Body of pancreas (tissue), 4 donors: ENCODE measurements at regions of chr20 and their contacts with region 1.

Region 1: DNA sequence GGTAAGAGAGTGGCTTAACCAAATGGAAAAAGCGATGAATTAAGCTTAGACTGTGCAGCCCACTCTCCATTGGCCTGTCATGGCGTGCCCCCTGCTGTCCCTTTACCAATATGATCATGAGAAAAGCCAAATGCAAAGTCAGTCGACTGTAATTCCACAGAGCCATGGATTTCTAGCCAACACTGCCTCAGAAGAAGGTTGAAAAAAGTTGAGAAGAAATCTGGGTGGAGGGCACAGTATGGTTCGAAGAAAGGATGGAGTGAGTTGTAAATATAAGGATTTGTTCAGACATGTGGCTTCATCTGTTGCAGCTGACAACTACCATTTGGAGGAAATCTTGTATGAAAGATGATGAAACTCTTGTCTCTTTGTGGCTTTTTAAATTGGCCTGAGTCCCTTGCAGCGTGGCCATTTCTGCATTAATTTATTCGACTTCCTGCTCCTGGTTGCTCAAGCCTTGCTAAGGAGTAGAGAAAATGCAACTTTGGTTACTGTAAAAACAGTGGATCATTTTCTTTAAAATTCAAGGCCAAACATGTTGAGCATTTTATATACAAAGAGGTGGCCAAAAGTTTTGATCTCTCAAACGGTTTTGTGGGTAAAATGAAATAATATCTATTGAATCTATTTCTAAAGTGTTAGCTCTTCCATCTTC is 251.5 kb downstream of the DOK5 start:
- DNase-seq: peak; percentile 58 to 71 (median 66)
- ATAC-seq: peak; percentile 81
- H3K4me3 ChIP-seq: no peak overlapping the region
- H3K27ac ChIP-seq: no peak overlapping the region
- H3K4me1 ChIP-seq: no peaks in the 10 kb centered on the region
- H3K27me3 ChIP-seq: no peaks in the 10 kb centered on the region
- CTCF ChIP-seq: peak; percentile 22 to 83 (median 76)
- POLR2A ChIP-seq: no peak

Region 2: DNA sequence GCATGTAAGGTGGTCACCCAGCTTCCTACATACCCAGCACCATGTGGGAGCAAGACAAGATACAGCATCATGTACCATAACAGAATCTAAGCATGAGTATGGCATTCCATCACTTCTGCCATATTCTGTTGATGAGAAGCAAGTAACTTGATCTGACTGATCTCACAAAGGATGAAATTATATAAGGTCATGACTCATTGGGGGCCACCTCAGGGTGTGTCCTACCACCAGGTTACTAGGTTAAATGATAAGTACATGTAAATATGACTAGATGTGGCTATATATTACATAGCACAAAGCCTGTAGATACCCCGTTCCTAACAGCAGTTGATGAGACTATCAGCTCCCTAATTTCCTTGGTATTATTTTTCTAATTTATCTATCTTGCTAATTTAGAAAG is 38.4 kb before region 1 on chr20:
- intact Hi-C with region 1: loop called (anchors 5 kb)
- DNase-seq: no peak
- ATAC-seq: no peak
- H3K4me3 ChIP-seq: no peak overlapping the region
- H3K27ac ChIP-seq: no peak overlapping the region
- H3K4me1 ChIP-seq: peaks cover 24% of the 10 kb centered on the region
- H3K27me3 ChIP-seq: no peaks in the 10 kb centered on the region
- CTCF ChIP-seq: no peak
- POLR2A ChIP-seq: no peak